IMR-90 (cell line): ENCODE measurements at regions of chr4 and their contacts with region 1.

Region 1: GRCh38 chr4:15956179-15956850 is 6.7 kb downstream of the FGFBP2 start:
- DNase-seq: peak; percentile 45
- ATAC-seq: peak; percentile 91
- H3K4me3 ChIP-seq: no peak overlapping the region
- H3K27ac ChIP-seq: no peak overlapping the region
- H3K4me1 ChIP-seq: no peaks in the 10 kb centered on the region
- H3K27me3 ChIP-seq: peaks cover 14% of the 10 kb centered on the region
- CTCF ChIP-seq: peak; percentile 96
- POLR2A ChIP-seq: no peak
- RAD21 ChIP-seq: peak; percentile 98

Region 2: DNA sequence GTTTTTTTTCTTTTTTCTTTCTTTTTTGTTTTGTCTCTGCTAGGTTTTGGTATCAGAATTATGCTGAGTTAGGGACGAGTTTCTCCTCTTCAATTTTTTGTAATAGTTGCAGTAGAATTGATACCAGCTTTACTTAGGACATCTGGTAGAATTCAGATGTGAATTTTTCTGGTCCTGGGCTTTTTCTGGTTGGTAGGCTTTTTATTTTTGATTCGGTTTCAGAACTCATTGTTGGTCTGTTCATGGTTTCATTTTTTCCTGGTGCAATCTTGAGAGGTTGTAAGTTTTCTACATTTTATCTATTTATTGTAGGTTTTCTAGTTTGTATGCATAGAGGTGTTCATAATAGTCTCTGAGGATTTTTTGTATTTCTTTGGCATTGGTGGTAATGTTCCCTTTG is 1452.2 kb before region 1 on chr4:
- CTCF ChIA-PET with region 1: no interaction called
- POLR2A ChIA-PET with region 1: no interaction called
- dilution Hi-C with region 1: no loop called
- in situ Hi-C with region 1: no loop called
- intact Hi-C with region 1: no loop called
- DNase-seq: no peak
- ATAC-seq: no peak
- H3K4me3 ChIP-seq: no peak overlapping the region
- H3K27ac ChIP-seq: no peak overlapping the region
- H3K4me1 ChIP-seq: no peaks in the 10 kb centered on the region
- H3K27me3 ChIP-seq: no peaks in the 10 kb centered on the region
- CTCF ChIP-seq: no peak
- POLR2A ChIP-seq: no peak
- RAD21 ChIP-seq: no peak

Region 3: GRCh38 chr4:14862891-14863290 is 1093.4 kb before region 1 on chr4:
- CTCF ChIA-PET with region 1: no interaction called
- POLR2A ChIA-PET with region 1: no interaction called
- dilution Hi-C with region 1: no loop called
- in situ Hi-C with region 1: no loop called
- intact Hi-C with region 1: no loop called
- DNase-seq: no peak
- ATAC-seq: no peak; the same call in 1 of the 2 replicates
- H3K4me3 ChIP-seq: no peak overlapping the region
- H3K27ac ChIP-seq: no peak overlapping the region
- H3K4me1 ChIP-seq: no peaks in the 10 kb centered on the region
- H3K27me3 ChIP-seq: peaks cover 8% of the 10 kb centered on the region
- CTCF ChIP-seq: no peak
- POLR2A ChIP-seq: no peak
- RAD21 ChIP-seq: no peak

Region 4: GRCh38 chr4:15043226-15043625 is 913.1 kb before region 1 on chr4:
- CTCF ChIA-PET with region 1: no interaction called
- POLR2A ChIA-PET with region 1: interaction called, 12 read pairs
- dilution Hi-C with region 1: no loop called
- in situ Hi-C with region 1: no loop called
- intact Hi-C with region 1: no loop called
- DNase-seq: no peak
- ATAC-seq: no peak
- H3K4me3 ChIP-seq: no peak overlapping the region
- H3K27ac ChIP-seq: no peak overlapping the region
- H3K4me1 ChIP-seq: no peaks in the 10 kb centered on the region; the same call in 1 of the 2 replicates
- H3K27me3 ChIP-seq: no peaks in the 10 kb centered on the region
- CTCF ChIP-seq: no peak
- POLR2A ChIP-seq: no peak
- RAD21 ChIP-seq: no peak

Region 5: DNA sequence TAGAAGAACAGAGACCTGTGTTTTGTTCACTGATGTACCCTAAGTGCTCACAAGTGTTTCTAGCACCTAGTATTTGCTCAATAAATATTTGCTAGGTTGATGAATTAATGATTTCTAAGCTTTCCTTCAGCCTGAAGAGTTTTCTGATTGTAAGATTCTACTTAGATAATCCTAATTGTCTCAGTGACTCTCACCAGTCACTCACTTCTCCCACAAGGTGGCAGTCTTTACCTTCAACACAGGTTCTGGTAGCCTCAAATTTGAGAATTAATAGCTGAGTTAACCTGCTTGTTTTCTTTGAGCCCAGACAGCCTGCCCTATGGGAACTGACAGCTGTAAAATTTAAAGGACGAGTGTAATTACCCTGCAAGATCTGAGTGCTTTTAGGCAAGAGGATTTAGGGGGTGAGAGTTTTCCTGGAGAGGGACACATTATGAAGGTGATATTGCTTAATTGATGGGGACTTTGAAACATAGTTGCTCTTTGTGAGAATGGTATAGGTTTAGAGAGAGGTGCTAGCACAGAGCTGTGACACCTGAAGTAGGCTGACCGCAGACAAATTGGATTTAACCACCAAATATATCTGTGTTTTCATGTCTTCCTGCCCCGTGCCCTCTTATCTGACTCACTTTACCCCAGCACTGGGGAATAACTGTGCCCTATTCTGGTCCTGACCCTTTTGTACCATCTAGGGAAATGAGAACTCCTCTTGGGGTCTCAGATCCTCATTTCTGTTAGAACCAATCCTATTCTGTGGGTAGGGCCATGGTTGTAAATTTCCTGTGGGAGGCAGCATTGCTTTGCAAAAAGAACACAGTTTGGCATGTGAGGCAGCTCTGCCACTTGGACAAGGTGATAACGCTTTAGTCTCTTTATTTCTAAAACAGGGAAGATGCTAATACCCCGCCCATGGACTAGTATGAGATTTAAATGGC is 150.5 kb before region 1 on chr4:
- CTCF ChIA-PET with region 1: interaction called, 25 read pairs
- POLR2A ChIA-PET with region 1: interaction called, 3 read pairs
- dilution Hi-C with region 1: no loop called
- in situ Hi-C with region 1: loop called (anchors 5 kb)
- intact Hi-C with region 1: loop called (anchors 1 kb)
- DNase-seq: peak; percentile 63
- ATAC-seq: peak; percentile 84
- H3K4me3 ChIP-seq: no peak overlapping the region
- H3K27ac ChIP-seq: no peak overlapping the region
- H3K4me1 ChIP-seq: no peaks in the 10 kb centered on the region
- H3K27me3 ChIP-seq: peaks cover 27% of the 10 kb centered on the region
- CTCF ChIP-seq: peak; percentile 83
- POLR2A ChIP-seq: no peak
- RAD21 ChIP-seq: peak; percentile 84

Region 6: DNA sequence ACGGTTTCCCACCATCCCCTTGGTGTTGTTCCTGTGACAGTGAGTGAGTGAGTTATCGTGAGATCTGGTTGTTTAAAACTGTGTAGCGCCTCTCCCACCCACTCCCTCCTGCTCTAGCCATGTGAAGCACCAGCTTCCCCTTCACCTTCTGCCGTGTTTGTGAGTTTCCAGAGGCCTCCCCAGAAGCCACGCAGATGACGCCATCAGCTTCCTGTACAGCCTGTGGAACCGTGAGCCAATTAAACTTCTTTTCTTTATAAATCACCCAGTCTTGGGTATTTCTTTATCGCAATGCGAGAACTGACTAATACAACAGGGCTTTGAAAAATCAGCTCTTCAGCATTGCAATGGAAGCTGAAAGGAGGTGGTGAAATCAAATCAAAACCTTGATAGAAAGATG is 67.8 kb before region 1 on chr4:
- CTCF ChIA-PET with region 1: interaction called, 67 read pairs
- POLR2A ChIA-PET with region 1: no interaction called
- dilution Hi-C with region 1: no loop called
- in situ Hi-C with region 1: loop called (anchors 5 kb)
- intact Hi-C with region 1: no loop called
- DNase-seq: peak; percentile 12
- ATAC-seq: no peak
- H3K4me3 ChIP-seq: no peak overlapping the region
- H3K27ac ChIP-seq: no peak overlapping the region
- H3K4me1 ChIP-seq: peaks cover 2% of the 10 kb centered on the region; the same call in 1 of the 2 replicates
- H3K27me3 ChIP-seq: peaks cover 33% of the 10 kb centered on the region
- CTCF ChIP-seq: no peak
- POLR2A ChIP-seq: no peak
- RAD21 ChIP-seq: no peak

Region 7: DNA sequence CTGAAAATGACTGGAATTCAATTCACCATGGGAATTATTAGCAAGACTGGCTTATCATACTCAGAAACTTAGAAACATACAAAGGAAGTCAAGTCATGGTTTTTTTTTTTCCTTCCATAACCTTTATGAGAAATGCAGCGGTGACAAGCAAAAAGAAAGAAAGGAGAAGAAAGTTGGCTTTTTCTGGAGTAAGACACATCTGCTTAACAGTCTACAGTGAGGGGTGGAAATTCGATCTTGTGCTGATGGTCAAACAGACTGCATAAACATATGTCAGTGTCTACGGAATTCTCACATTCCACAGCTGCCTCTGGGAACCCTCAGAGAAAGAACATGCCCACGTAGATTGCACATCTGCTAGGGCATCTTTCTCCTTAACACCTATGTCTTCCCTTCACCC is 72.9 kb after region 1 on chr4:
- CTCF ChIA-PET with region 1: no interaction called
- POLR2A ChIA-PET with region 1: no interaction called
- dilution Hi-C with region 1: no loop called
- in situ Hi-C with region 1: no loop called
- intact Hi-C with region 1: no loop called
- DNase-seq: peak; percentile 79
- ATAC-seq: peak; percentile 76
- H3K4me3 ChIP-seq: no peak overlapping the region
- H3K27ac ChIP-seq: no peak overlapping the region
- H3K4me1 ChIP-seq: peaks cover 3% of the 10 kb centered on the region; the same call in 1 of the 2 replicates
- H3K27me3 ChIP-seq: peaks cover 10% of the 10 kb centered on the region
- CTCF ChIP-seq: no peak
- POLR2A ChIP-seq: no peak
- RAD21 ChIP-seq: no peak